Activated CD4-positive, alpha-beta memory T cell treated with anti-CD3 and anti-CD28 coated beads, Interleukin-2, amount 10 ng/mL, durations not matched to agents 7 days and 5 days (primary cell): ENCODE measurements at regions of chr3 and their contacts with region 1.

Region 1: GRCh38 chr3:50568947-50569749 is at the start of gene HEMK1:
- DNase-seq: peak; percentile 95
- H3K4me3 Mint-ChIP-seq: peak within 1 kb of the TSS; percentile 98
- H3K27ac Mint-ChIP-seq: peak within 1 kb of the TSS; percentile 97
- H3K4me1 Mint-ChIP-seq: peaks cover 68% of the 10 kb centered on the region
- H3K27me3 Mint-ChIP-seq: no peaks in the 10 kb centered on the region
- total RNA-seq, gene HEMK1: 49.6 to 50.1 TPM

Region 2: DNA sequence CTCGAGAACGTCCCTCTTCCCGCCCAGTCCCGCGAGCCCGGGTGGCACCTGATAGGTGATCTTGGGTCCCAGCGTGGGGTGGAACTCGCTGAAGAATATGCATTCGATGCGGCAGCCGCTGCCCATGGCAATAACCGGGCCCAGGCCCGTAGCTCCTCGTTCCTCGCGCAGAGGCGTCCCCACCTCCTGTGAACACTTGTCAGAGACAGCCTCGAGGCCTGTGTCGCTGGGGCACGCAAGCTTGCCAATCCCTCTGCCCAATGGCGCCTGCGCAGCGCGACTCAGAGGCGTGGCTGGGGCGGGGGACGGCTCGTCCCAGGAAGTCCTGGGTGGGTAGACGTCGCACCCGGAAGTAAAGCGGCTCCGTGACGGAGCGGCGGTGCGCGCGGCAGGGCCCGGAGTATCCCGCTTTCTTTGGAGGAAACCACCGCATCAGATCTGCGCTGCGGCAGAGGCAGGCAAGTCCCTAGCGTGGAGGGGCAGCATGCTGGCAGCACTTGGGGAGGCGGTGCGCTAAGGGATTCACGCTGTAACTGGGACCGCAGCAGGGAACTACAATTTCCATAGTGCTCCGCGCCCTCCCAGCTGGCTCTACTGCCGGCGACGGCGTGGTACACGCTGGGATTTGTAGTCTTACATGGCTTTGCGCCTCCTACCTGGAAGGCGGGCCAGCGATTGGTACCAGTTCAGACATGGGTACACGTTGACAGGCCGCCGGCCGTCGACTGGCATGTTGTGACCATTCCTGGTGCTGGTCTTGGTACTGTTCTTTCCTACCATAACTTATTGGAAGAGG is 218.4 kb before region 1 on chr3 and contains the starts of genes CYB561D2 and NPRL2:
- CTCF ChIA-PET with region 1: interaction called, 4 read pairs
- POLR2A ChIA-PET with region 1: interaction called, 22 read pairs
- DNase-seq: peak; percentile 99
- H3K4me3 Mint-ChIP-seq: peak within 1 kb of the TSS; percentile 91
- H3K27ac Mint-ChIP-seq: peak within 1 kb of the TSS; percentile 93
- H3K4me1 Mint-ChIP-seq: peaks cover 66% of the 10 kb centered on the region
- H3K27me3 Mint-ChIP-seq: no peaks in the 10 kb centered on the region
- total RNA-seq, gene CYB561D2: 37.1 to 39.7 TPM
- total RNA-seq, gene NPRL2: 48.8 to 50.1 TPM

Region 3: GRCh38 chr3:50550079-50550741 is 18.9 kb before region 1 on chr3:
- CTCF ChIA-PET with region 1: interaction called, 10 read pairs
- POLR2A ChIA-PET with region 1: interaction called, 27 read pairs
- DNase-seq: peak; percentile 73
- H3K4me3 Mint-ChIP-seq: no peak overlapping the region
- H3K27ac Mint-ChIP-seq: no peak overlapping the region
- H3K4me1 Mint-ChIP-seq: peaks cover 8% of the 10 kb centered on the region
- H3K27me3 Mint-ChIP-seq: no peaks in the 10 kb centered on the region

Region 4: GRCh38 chr3:50587806-50588758 is 18.9 kb after region 1 on chr3:
- CTCF ChIA-PET with region 1: interaction called, 331 read pairs
- POLR2A ChIA-PET with region 1: interaction called, 877 read pairs
- DNase-seq: peak; percentile 81
- H3K4me3 Mint-ChIP-seq: peak overlapping the region; percentile 6
- H3K27ac Mint-ChIP-seq: peak overlapping the region; percentile 96
- H3K4me1 Mint-ChIP-seq: peaks cover 78% of the 10 kb centered on the region
- H3K27me3 Mint-ChIP-seq: no peaks in the 10 kb centered on the region

Region 5: DNA sequence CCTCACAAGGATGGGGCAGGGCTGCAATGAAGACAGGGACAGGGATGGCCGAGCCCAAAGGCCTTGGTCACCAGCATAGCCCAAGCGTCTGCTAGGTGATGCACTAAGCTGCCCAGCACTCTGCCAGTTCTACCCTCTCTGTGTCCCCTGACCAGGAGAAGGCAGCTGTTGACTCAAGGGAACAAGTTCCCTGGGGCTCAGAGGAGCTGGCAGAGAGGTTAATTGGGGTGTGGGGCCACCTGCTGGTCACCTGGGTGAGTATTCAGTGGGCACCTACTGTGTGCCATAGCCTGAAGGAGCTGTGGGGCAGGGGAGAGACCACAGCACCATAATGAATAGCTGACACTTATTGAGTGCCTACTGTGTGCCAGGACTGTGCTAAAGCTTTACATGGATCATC is 83.6 kb after region 1 on chr3:
- CTCF ChIA-PET with region 1: interaction called, 23 read pairs
- POLR2A ChIA-PET with region 1: interaction called, 9 read pairs
- DNase-seq: peak; percentile 68
- H3K4me3 Mint-ChIP-seq: no peak overlapping the region
- H3K27ac Mint-ChIP-seq: peak overlapping the region; percentile 16
- H3K4me1 Mint-ChIP-seq: peaks cover 23% of the 10 kb centered on the region
- H3K27me3 Mint-ChIP-seq: no peaks in the 10 kb centered on the region